ENCODE measurements at regions of chr16 and their contacts with region 1.

Region 1: GRCh38 chr16:75345711-75346110 is 87.6 kb downstream of the CFDP1 start:
- DNase-seq: no peak
- ATAC-seq: no peak
- H3K4me3 ChIP-seq: no peak overlapping the region
- H3K4me3 Mint-ChIP-seq: no peak overlapping the region
- H3K27ac ChIP-seq: no peak overlapping the region
- H3K27ac Mint-ChIP-seq: no peak overlapping the region
- H3K4me1 ChIP-seq: no peaks in the 10 kb centered on the region
- H3K4me1 Mint-ChIP-seq: peaks cover 0 to 5% (median 3%) of the 10 kb centered on the region in 3 donors
- H3K27me3 ChIP-seq: no peaks in the 10 kb centered on the region
- H3K27me3 Mint-ChIP-seq: no peaks in the 10 kb centered on the region

Region 2: DNA sequence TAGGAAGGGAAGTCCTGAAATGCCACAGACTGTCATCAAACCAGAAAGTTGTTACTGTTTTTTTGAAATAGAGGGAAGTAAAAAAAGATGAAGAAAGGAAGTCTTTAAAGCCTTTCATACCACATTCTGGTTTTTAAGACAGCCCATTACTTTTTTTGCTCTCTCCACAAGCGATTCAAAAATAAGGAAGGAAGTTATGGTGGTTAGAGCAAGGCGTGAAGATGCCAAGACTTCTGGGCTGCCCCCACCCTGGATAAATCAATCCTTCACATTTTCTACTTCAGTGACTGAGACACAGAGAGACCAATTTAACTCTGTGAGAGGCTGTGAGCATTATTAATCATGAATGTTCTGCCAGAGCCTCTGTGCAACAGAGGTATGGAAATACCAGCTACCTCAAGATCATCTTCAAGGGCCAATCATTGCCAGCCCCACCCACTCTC is 12.0 kb before region 1 on chr16:
- CTCF ChIA-PET with region 1: no interaction called
- POLR2A ChIA-PET with region 1: no interaction called
- DNase-seq: no peak
- ATAC-seq: peak in 2 of 4 experiments; percentile 23 to 36
- H3K4me3 ChIP-seq: no peak overlapping the region
- H3K4me3 Mint-ChIP-seq: peak overlapping the region in 1 of 3 donors; percentile 40
- H3K27ac ChIP-seq: no peak overlapping the region
- H3K27ac Mint-ChIP-seq: peak overlapping the region; percentile 54 to 67
- H3K4me1 ChIP-seq: peaks cover 7 to 10% of the 10 kb centered on the region in 2 experiments
- H3K4me1 Mint-ChIP-seq: peaks cover 18 to 23% (median 19%) of the 10 kb centered on the region in 3 donors
- H3K27me3 ChIP-seq: no peaks in the 10 kb centered on the region
- H3K27me3 Mint-ChIP-seq: no peaks in the 10 kb centered on the region

Region 3: GRCh38 chr16:75361936-75362335 is 16.2 kb after region 1 on chr16:
- CTCF ChIA-PET with region 1: no interaction called
- POLR2A ChIA-PET with region 1: no interaction called
- DNase-seq: no peak
- ATAC-seq: no peak
- H3K4me3 ChIP-seq: no peak overlapping the region
- H3K4me3 Mint-ChIP-seq: no peak overlapping the region
- H3K27ac ChIP-seq: no peak overlapping the region
- H3K27ac Mint-ChIP-seq: no peak overlapping the region
- H3K4me1 ChIP-seq: no peaks in the 10 kb centered on the region
- H3K4me1 Mint-ChIP-seq: no peaks in the 10 kb centered on the region
- H3K27me3 ChIP-seq: no peaks in the 10 kb centered on the region
- H3K27me3 Mint-ChIP-seq: no peaks in the 10 kb centered on the region

Region 4: GRCh38 chr16:75647492-75648264 is 302.0 kb after region 1 on chr16 and contains the starts of genes KARS1 and TERF2IP:
- CTCF ChIA-PET with region 1: no interaction called
- POLR2A ChIA-PET with region 1: no interaction called
- DNase-seq: peak; percentile 83 to 98 (median 94)
- ATAC-seq: peak; percentile 86 to 88 (median 87)
- H3K4me3 ChIP-seq: peak within 1 kb of the TSS; percentile 89 to 100
- H3K4me3 Mint-ChIP-seq: peak within 1 kb of the TSS; percentile 99 to 100 (median 99)
- H3K27ac ChIP-seq: peak within 1 kb of the TSS; percentile 94
- H3K27ac Mint-ChIP-seq: peak within 1 kb of the TSS; percentile 99
- H3K4me1 ChIP-seq: peaks cover 37 to 54% of the 10 kb centered on the region in 2 experiments
- H3K4me1 Mint-ChIP-seq: peaks cover 66 to 74% (median 69%) of the 10 kb centered on the region in 3 donors
- H3K27me3 ChIP-seq: no peaks in the 10 kb centered on the region
- H3K27me3 Mint-ChIP-seq: no peaks in the 10 kb centered on the region
- total RNA-seq, gene KARS1: 121 to 151 (median 128) TPM
- total RNA-seq, gene TERF2IP: 86.0 to 104 (median 94.0) TPM

Region 5: DNA sequence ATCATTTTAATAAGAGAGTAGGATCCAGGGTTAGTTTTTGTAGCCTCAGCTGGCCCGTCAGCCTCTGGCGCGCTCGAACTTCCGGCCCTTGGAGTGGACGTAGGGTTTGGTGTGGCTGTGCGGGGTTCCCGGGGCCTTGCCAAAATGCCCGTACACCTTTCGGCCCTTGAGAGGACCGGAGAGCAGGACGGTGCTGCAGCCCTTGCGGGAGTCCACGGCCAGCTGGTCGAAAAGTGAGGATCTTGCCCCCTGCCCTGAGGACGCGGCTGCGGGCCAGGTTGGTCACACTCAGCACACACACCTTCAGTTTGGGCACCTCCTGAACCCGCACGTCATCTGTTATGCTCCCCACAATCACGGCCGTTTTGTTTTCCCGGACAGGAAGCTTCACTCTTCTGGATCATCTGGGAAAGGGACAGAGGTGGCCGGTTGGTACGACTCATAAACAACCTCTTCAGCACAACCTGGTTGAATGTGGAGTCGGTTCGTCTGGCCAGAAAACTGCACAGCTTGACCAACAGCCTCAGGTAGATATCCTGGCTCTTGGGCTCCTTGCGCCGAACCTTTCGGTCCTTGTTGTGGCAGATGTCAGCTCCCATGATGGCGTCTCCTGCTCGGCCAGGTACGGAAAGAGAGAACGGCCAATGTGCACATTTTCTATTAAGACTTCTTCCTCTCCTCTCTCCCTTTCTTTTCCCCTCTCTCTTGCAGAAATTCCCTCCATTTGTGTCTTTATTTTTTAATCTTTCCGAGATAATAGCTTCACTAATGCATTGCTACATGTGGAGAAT is 889.5 kb after region 1 on chr16:
- CTCF ChIA-PET with region 1: no interaction called
- POLR2A ChIA-PET with region 1: no interaction called
- DNase-seq: no peak
- ATAC-seq: no peak
- H3K4me3 ChIP-seq: no peak overlapping the region
- H3K4me3 Mint-ChIP-seq: no peak overlapping the region
- H3K27ac ChIP-seq: no peak overlapping the region
- H3K27ac Mint-ChIP-seq: no peak overlapping the region
- H3K4me1 ChIP-seq: no peaks in the 10 kb centered on the region
- H3K4me1 Mint-ChIP-seq: no peaks in the 10 kb centered on the region
- H3K27me3 ChIP-seq: no peaks in the 10 kb centered on the region
- H3K27me3 Mint-ChIP-seq: no peaks in the 10 kb centered on the region

Region 6: GRCh38 chr16:77190478-77191258 is 1845.0 kb after region 1 on chr16 and contains the start of gene MON1B:
- CTCF ChIA-PET with region 1: interaction called in 1 of 2 experiments, 10 read pairs
- POLR2A ChIA-PET with region 1: no interaction called
- DNase-seq: peak; percentile 84 to 98 (median 95)
- ATAC-seq: peak; percentile 91 to 97 (median 96)
- H3K4me3 ChIP-seq: peak within 1 kb of the TSS; percentile 85 to 92
- H3K4me3 Mint-ChIP-seq: peak within 1 kb of the TSS; percentile 95 to 97 (median 95)
- H3K27ac ChIP-seq: peak within 1 kb of the TSS; percentile 93
- H3K27ac Mint-ChIP-seq: peak within 1 kb of the TSS; percentile 99 to 100
- H3K4me1 ChIP-seq: peaks cover 8 to 43% of the 10 kb centered on the region in 2 experiments
- H3K4me1 Mint-ChIP-seq: peaks cover 43 to 49% (median 48%) of the 10 kb centered on the region in 3 donors
- H3K27me3 ChIP-seq: no peaks in the 10 kb centered on the region
- H3K27me3 Mint-ChIP-seq: peaks cover 3 to 4% of the 10 kb centered on the region in 2 donors
- total RNA-seq, gene MON1B: 60.8 to 91.8 (median 81.9) TPM

Measured in T-cell (primary cell).